ENCODE measurements at regions of chr12 and their contacts with region 1.

Region 1: DNA sequence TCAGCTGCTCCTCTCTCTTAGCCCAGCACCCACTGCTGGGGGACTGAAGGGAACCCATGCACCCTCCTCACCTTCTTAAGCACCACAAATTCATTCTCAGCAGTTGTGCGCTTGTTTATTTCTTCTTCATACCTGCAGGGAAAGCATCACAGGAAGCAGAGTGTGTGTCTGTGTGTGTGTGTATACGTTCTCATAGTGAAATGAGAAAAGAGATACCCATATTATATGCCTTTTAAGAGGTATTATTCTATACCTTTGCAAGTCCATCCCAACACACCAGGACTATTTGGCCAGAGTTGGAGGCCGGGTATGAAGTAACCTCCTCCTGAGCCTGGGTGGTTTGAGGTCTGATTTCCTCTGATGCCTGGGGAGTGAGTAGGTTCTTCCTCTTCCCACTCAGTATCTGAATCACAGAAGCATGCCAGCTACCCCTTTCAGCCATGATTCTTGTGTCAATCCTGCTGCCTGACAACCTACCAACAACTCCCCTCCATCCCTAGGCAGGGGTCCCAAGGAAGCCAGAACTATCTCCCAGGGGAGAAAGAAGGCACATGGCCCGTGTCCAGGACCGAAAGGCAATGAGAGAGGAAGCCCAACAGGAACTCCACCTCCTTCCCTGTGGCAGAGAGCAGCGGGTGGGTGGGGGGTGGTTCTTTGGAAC is 3.0 kb downstream of the KRT73 start:
- DNase-seq: no peak
- H3K4me3 ChIP-seq: no peak overlapping the region
- H3K27ac ChIP-seq: no peak overlapping the region
- H3K4me1 ChIP-seq: no peaks in the 10 kb centered on the region
- H3K27me3 ChIP-seq: peaks cover 0 to 37% of the 10 kb centered on the region in 2 donors
- CTCF ChIP-seq: no peak

Region 2: GRCh38 chr12:52395761-52396434 is 219.4 kb before region 1 on chr12:
- intact Hi-C with region 1: no loop called
- DNase-seq: no peak
- H3K4me3 ChIP-seq: no peak overlapping the region
- H3K27ac ChIP-seq: no peak overlapping the region
- H3K4me1 ChIP-seq: peaks cover 0 to 17% (median 5%) of the 10 kb centered on the region in 4 donors
- H3K27me3 ChIP-seq: peaks cover 0 to 24% of the 10 kb centered on the region in 2 donors
- CTCF ChIP-seq: no peak

Region 3: DNA sequence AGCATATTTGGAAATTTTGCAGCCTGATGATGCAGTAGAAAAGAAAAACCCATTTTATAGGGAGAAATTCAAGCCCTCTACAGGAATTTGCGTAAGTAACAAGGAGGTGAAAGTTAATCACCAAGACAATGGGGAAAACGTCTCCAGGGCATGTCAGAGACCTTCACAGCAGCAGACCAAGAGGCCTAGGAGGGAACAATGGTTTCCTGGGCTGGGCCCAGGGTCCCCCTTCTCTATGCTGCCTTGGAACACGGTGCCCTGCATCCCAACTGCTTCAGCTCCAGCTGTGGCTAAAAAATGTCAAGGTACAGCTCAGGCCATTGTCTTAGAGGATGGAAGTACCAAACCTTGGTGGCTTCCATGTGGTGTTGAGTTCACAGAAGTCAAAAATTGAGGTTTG is 135.3 kb before region 1 on chr12:
- intact Hi-C with region 1: no loop called
- DNase-seq: no peak
- H3K4me3 ChIP-seq: no peak overlapping the region
- H3K27ac ChIP-seq: no peak overlapping the region
- H3K4me1 ChIP-seq: no peaks in the 10 kb centered on the region
- H3K27me3 ChIP-seq: no peaks in the 10 kb centered on the region
- CTCF ChIP-seq: no peak

Region 4: GRCh38 chr12:52667511-52667910 is 52.2 kb after region 1 on chr12:
- intact Hi-C with region 1: no loop called
- DNase-seq: no peak
- H3K4me3 ChIP-seq: no peak overlapping the region
- H3K27ac ChIP-seq: no peak overlapping the region
- H3K4me1 ChIP-seq: no peaks in the 10 kb centered on the region
- H3K27me3 ChIP-seq: peaks cover 0 to 22% of the 10 kb centered on the region in 2 donors
- CTCF ChIP-seq: no peak

Region 5: DNA sequence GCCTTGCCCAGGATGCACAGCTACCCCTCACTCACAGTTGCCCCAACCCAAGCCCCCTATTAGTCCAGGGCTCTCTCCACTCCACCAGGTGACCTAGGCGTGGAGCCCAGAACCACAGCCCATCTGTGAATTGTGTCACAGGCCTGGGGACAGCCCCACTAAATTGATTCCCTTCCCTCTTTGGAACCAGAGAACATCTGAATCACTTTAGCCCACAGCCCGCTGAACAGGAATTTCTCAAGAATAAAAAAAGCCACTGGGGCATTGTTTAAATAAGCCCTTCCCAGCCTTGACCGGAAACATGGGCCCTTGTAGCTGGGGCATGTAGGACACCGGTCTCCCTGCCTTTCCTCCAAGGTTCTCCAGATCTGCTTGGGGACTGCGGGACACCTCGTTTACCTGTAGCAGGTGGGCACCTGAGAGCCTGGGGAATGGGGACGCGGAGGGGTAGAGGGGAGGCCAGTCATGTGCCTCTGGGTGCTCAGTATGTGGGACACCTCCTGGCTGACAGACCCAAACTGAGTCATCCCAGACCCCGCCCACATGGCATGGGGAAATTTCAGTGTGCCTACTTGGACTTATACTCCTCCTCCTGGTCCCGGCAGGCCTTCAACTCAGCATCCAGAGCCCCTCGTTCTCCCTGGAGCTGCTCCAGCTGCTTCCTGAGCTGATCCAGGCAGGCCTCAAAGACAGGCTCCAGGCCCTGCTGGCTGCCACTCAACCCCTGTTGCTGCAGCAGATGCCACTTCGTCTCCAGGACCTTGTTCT is 232.2 kb after region 1 on chr12:
- intact Hi-C with region 1: loop called (anchors 10 kb)
- DNase-seq: no peak
- H3K4me3 ChIP-seq: no peak overlapping the region
- H3K27ac ChIP-seq: no peak overlapping the region
- H3K4me1 ChIP-seq: no peaks in the 10 kb centered on the region
- H3K27me3 ChIP-seq: peaks cover 0 to 29% of the 10 kb centered on the region in 2 donors
- CTCF ChIP-seq: no peak